Right ventricle myocardium superior (tissue), 1 donor: ENCODE measurements at regions of chr10 and their contacts with region 1.

Region 1: DNA sequence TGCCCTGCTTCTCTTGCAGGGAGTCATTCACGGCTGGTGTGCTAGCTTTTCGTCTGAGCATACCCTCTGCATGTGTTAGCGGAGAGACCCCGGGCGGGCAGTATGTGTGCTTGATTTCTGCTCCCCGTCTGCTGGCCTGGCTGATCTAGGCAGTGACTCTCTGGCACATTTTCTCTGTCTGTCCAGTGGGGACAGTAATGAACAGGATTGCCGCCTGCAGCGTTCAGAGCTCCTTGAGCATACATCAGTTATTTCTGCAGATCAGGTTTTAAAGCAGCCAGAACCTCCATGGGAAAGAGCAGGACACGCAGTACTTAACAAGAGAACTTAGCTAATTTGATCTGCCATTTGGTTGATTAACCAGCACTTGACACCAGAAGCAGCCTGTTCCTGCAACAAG is 242.5 kb downstream of the CELF2 start:
- DNase-seq: no peak
- ATAC-seq: peak; percentile 18

Region 2: DNA sequence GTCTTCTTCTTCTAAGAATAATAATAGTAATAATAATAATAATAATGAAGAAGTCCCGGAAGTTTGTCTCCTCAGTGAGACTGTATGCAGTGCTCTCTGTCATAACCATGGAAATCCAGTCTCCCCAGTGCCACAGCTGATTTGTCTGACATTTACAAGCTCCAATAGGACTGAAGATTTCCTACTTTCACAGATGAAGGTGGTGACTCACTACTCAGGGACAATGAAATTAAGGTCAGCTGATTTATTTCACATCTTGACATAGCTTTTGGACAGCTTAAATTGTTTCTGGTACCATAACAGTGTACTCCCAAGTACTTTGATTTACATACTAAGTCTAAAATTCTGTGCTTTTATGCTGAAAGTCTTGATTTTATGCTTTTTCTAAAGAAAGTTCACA is 235.6 kb before region 1 on chr10:
- intact Hi-C with region 1: loop called (anchors 10 kb)
- DNase-seq: no peak
- ATAC-seq: peak; percentile 38

Region 3: DNA sequence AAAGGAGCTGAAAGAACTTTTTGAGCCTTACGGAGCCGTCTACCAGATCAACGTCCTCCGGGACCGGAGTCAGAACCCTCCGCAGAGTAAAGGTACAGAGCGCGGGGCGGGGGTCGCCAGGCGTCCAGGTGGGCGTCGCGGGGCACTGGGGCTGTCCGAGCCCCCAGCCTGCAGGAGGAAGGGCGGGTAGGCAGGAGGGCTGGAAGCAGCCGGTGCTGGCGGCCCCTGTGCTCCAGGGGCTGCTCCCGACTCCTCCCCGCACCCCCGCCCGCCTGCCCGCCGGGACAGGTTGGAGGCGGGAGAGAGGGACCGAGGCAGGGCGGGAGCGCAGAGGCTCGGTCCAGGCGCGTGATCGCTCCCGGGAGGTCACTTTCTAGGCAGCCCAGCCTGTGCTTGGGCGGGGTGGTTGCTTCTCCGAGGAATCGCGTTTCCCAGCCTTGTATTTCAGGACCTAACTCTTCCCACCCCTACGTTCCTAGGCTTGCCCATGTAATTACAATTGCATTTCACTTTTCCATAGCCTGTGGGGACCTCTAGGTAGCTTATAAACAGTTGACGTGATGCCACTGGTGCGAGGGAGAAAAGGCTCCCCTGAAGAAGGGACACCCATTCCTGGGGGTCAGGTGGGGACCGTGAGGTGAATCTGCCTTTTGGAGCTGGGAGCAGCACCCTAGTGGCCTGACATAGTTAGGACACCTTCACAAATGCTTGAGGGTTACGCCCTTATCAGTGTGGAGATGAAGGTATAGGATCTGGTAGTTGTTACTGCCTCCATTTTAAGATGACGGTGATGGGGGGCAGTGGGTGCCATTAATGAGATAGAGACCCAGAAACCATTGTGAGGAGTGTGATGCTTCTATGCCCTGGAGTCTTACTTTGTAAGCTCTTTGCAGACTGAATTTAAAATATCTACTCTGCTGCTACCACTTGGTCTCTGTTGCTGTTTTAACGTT is 94.3 kb before region 1 on chr10:
- intact Hi-C with region 1: loop called (anchors 10 kb)
- DNase-seq: peak; percentile 82
- ATAC-seq: peak; percentile 74